ENCODE measurements at regions of chr1 and their contacts with region 1.

Region 1: DNA sequence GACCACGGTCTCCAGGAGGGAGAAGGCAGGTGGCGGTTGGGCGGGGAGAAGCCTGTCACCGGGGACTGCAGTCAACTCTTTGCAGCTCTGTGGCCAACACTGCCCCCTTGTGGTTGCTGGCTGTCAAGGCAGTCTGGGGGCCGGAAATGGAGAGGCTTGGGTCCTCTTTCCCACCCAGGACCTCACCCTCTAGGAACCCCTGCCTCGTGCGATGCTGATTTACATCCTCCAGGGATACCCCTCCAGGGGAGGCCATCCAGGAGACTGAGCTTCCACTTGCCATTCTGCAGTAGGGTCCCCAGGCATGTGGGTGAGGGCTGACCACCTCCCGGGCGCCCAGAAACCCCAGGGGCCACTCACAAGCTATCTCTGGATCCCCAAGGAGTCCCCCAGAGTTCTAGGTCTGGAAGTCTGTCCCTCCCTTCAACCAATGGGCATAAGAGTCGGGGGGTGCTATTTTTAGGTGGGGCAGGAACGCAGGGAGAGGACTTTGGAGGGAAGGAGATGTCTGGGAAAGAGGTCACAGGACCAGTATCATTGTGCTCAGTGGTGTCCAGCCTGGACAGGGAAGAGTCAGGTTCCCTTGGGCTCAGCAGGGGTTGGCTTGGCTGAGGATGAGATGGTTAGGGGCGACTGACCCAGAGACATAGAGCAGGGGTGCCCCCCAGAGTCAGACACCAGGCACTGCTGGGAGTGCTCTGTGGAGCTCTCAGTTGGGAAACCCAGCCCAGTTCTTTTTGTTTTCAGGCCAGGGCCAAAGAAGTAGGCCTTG is 7.1 kb upstream of the GPR61 start:
- DNase-seq: peak; percentile 84
- ATAC-seq: peak; percentile 75 to 86

Region 2: GRCh38 chr1:109263597-109264398 is 268.8 kb before region 1 on chr1:
- intact Hi-C with region 1: loop called in 1 of 2 experiments (anchors 10 kb)
- DNase-seq: peak; percentile 87
- ATAC-seq: peak; percentile 84 to 89

Region 3: GRCh38 chr1:109277434-109278204 is 254.9 kb before region 1 on chr1:
- intact Hi-C with region 1: loop called in 1 of 2 experiments (anchors 5 kb)
- DNase-seq: peak; percentile 80
- ATAC-seq: peak; percentile 64 to 75

Region 4: GRCh38 chr1:109493805-109494539 is 38.6 kb before region 1 on chr1 and contains the start of gene CYB561D1:
- intact Hi-C with region 1: loop called (anchors 2 to 5 kb)
- DNase-seq: peak; percentile 91
- ATAC-seq: peak; percentile 91 to 94
- total RNA-seq, gene CYB561D1: 5.8 to 5.9 TPM

Region 5: GRCh38 chr1:109499661-109500536 is 32.7 kb before region 1 on chr1:
- intact Hi-C with region 1: loop called in 1 of 2 experiments (anchors 2 kb)
- DNase-seq: peak; percentile 45
- ATAC-seq: peak in 1 of 2 donors; percentile 16